ENCODE measurements at regions of chr3 and their contacts with region 1.

Region 1: DNA sequence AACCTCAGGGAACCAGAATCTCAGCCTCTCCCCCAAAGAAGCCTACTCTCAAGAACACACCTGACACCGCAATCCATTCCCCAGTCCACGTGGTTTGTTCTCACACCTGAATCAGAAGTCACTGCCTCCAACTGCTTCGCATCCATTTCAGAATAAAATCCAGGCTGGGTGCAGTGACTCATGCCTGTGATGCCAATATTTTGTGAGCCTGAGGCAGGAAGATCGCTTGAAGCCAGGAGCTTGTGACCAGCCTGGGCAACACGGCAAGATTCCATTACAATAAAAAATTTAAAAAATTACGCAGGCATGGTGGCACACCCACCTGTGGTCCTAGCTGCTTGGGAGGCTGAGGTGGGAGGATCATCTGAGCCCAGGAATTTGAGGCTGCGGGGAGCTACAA is 212.2 kb downstream of the FOXP1 start:
- DNase-seq: no peak
- H3K4me3 ChIP-seq: no peak overlapping the region
- H3K27ac ChIP-seq: no peak overlapping the region
- H3K4me1 ChIP-seq: peaks cover 0 to 4% (median 0%) of the 10 kb centered on the region in 4 experiments
- H3K27me3 ChIP-seq: no peaks in the 10 kb centered on the region

Region 2: GRCh38 chr3:71258116-71258515 is 113.2 kb before region 1 on chr3:
- CTCF ChIA-PET with region 1: no interaction called
- POLR2A ChIA-PET with region 1: interaction called, 10 read pairs
- DNase-seq: no peak
- H3K4me3 ChIP-seq: no peak overlapping the region
- H3K27ac ChIP-seq: no peak overlapping the region
- H3K4me1 ChIP-seq: peaks cover 0 to 4% (median 0%) of the 10 kb centered on the region in 4 experiments
- H3K27me3 ChIP-seq: no peaks in the 10 kb centered on the region

Measured in common myeloid progenitor, CD34-positive (primary cell).